Caco-2 (cell line): ENCODE measurements at regions of chr5 and their contacts with region 1.

Region 1: GRCh38 chr5:157917899-157918809 is 59.2 kb upstream of the CLINT1 start:
- DNase-seq: peak; percentile 78 to 80
- H3K4me3 ChIP-seq: no peak overlapping the region
- H3K4me3 Mint-ChIP-seq: peak overlapping the region; percentile 67
- H3K27ac Mint-ChIP-seq: peak overlapping the region; percentile 71
- H3K4me1 ChIP-seq: peaks cover 24% of the 10 kb centered on the region
- H3K4me1 Mint-ChIP-seq: peaks cover 22% of the 10 kb centered on the region
- H3K27me3 ChIP-seq: no peaks in the 10 kb centered on the region
- H3K27me3 Mint-ChIP-seq: no peaks in the 10 kb centered on the region
- CTCF ChIP-seq: peak; percentile 67 to 71

Region 2: GRCh38 chr5:157761690-157762621 is 156.2 kb before region 1 on chr5:
- CTCF ChIA-PET with region 1: no interaction called
- POLR2A ChIA-PET with region 1: no interaction called
- intact Hi-C with region 1: loop called (anchors 2 kb)
- DNase-seq: peak; percentile 44 to 53
- H3K4me3 ChIP-seq: no peak overlapping the region
- H3K4me3 Mint-ChIP-seq: no peak overlapping the region
- H3K27ac Mint-ChIP-seq: no peak overlapping the region
- H3K4me1 ChIP-seq: no peaks in the 10 kb centered on the region
- H3K4me1 Mint-ChIP-seq: no peaks in the 10 kb centered on the region
- H3K27me3 ChIP-seq: no peaks in the 10 kb centered on the region
- H3K27me3 Mint-ChIP-seq: no peaks in the 10 kb centered on the region
- CTCF ChIP-seq: peak; percentile 70 to 80

Region 3: DNA sequence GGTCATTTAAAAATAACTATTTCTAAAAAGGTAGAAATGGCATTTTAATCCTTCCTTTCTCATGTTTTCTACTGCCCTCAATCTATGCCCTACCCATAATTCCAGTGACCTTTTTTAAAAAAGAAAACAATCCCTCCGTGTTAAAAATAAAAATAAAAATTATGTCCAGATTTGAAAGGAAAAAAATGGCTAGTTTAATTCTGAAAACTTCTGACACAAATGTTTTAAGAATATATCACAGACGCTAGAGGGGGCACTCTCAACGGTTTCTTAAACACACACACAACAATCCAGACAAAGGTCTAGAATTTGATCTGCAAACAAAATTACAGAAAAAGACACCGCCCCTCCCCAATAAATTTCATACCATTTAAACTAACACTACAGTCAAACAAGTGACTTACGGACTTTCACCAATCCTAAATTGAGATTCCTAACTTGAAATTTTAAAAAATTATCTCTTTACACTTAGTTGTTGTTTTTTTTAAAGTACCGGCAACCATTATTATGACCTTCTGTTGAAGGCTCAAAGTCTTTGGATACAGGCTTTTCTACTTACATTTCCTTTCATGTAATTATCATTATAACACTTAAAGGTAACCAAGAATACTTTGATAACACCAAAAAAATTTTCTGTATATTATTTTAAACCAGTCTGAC is 97.4 kb before region 1 on chr5:
- CTCF ChIA-PET with region 1: no interaction called
- POLR2A ChIA-PET with region 1: no interaction called
- intact Hi-C with region 1: loop called (anchors 1 kb)
- DNase-seq: peak in 1 of 2 experiments; percentile 54
- H3K4me3 ChIP-seq: no peak overlapping the region
- H3K4me3 Mint-ChIP-seq: no peak overlapping the region
- H3K27ac Mint-ChIP-seq: peak overlapping the region; percentile 25
- H3K4me1 ChIP-seq: peaks cover 24% of the 10 kb centered on the region
- H3K4me1 Mint-ChIP-seq: peaks cover 17% of the 10 kb centered on the region
- H3K27me3 ChIP-seq: no peaks in the 10 kb centered on the region
- H3K27me3 Mint-ChIP-seq: no peaks in the 10 kb centered on the region
- CTCF ChIP-seq: peak; percentile 54 to 56

Region 4: GRCh38 chr5:157855404-157855994 is 62.7 kb before region 1 on chr5:
- CTCF ChIA-PET with region 1: interaction called, 3 read pairs
- POLR2A ChIA-PET with region 1: no interaction called
- intact Hi-C with region 1: loop called (anchors 1 kb)
- DNase-seq: peak; percentile 63 to 73
- H3K4me3 ChIP-seq: no peak overlapping the region
- H3K4me3 Mint-ChIP-seq: no peak overlapping the region
- H3K27ac Mint-ChIP-seq: no peak overlapping the region
- H3K4me1 ChIP-seq: peaks cover 9% of the 10 kb centered on the region
- H3K4me1 Mint-ChIP-seq: peaks cover 6% of the 10 kb centered on the region
- H3K27me3 ChIP-seq: no peaks in the 10 kb centered on the region
- H3K27me3 Mint-ChIP-seq: no peaks in the 10 kb centered on the region
- CTCF ChIP-seq: peak; percentile 65 to 68